SK-N-SH (cell line): ENCODE measurements at regions of chr16 and their contacts with region 1.

Region 1: DNA sequence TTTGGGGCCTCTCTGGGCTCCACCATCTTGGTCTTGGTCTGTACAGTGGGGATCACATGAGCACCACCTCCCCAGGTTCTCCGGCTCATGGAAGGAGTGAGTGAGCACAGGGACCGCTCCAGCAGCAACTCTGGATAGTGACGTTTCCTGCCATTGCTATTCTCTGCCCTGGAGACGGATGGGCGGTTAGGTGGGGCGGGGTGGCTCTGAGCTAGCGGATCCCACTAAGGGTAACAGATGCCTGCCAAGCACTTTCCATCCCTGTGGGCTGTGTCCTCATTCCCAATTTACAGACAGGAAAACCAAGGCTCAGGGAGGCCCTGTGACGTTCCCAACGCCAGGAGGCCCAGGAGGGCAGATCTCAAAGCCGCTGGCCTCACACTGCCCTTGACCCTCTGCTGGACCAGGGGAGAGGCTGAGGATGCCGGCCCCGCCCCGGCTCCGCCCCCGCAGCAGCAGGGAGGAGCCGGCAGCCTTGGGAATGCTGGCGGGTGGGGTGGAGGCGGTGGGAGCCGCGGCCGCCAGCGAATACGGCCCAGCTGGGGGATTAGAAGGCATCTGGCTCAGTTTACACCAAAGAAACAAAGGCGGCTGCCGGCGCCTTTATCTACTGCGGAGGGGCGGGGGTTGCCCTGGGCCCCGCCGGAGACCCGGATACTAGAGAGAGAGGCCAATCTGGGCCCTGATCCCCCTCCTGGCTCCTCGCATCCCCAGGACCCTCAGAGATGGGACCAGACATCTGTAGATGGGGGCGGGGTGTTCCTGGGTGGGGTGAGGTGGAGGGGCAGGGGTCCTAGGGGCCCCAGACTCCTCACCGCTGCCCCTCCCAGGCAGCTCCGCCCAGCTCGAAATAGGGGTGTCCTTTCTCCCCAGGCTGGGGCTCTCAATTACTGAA is 122.3 kb upstream of the CIBAR2 start:
- DNase-seq: peak; percentile 96
- H3K4me3 ChIP-seq: peak overlapping the region; percentile 44 to 61
- H3K27ac ChIP-seq: peak overlapping the region; percentile 60 to 90; a peak in 3 of 4 replicates
- H3K4me1 ChIP-seq: peaks cover 21 to 45% of the 10 kb centered on the region in 2 experiments; a peak in 3 of 4 replicates
- H3K27me3 ChIP-seq: no peaks in the 10 kb centered on the region
- CTCF ChIP-seq: no peak
- EP300 ChIP-seq: peak in 1 of 2 experiments; percentile 9; a peak in 1 of 4 replicates
- RAD21 ChIP-seq: no peak; the same call in 1 of the 2 replicates

Region 2: DNA sequence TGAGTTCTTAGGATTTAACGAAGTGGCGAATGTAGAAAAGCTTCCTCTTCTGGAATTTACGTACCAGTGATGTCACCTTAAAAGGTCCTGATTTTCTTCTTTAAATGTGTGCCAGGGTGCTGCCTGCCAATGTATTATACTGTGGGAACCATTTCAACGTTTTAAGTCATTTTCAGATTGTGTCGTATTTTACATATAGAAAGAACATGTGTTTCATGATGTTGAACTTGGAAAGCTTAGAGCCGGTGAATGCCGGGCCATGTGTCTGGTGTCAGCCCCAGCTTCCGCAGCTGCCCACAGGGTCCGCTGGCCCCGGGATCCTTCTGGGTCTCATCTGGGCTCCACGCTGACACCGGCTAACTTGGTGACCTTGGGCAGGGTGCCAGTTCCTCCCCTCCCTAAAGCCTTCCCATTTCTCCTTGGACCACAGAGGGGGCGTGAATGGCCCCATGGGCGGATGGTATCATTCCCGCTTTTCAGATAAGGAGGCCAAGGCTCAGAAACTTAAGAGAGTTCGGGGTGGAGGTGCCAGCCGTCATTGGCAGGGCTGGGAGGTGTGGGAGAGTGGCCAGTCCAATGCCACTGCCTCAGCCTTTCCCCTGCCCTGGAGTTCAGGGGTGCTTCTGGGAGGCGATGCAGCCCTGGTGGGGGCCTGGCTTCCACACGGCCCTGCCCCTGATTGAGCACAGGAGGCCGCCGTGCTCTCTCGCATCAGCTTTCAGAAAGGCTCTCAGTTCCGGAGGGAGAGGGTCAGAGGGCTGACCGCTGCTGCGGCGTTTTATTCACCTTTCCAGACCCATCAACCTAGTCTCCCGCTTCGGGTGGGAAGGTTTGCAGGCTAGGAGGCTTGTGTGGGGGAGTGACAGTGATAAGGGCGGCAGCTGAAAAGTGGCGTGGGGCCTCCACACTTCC is 53.5 kb before region 1 on chr16:
- CTCF ChIA-PET with region 1: interaction called, 122 read pairs
- POLR2A ChIA-PET with region 1: interaction called, 10 read pairs
- DNase-seq: no peak
- H3K4me3 ChIP-seq: no peak overlapping the region
- H3K27ac ChIP-seq: no peak overlapping the region; a peak in 1 of 4 replicates
- H3K4me1 ChIP-seq: peaks cover 0 to 52% of the 10 kb centered on the region in 2 experiments; a peak in 2 of 4 replicates
- H3K27me3 ChIP-seq: no peaks in the 10 kb centered on the region
- CTCF ChIP-seq: no peak
- EP300 ChIP-seq: no peak
- RAD21 ChIP-seq: no peak